Sigmoid colon (tissue), 7 donors: ENCODE measurements at regions of chr12 and their contacts with region 1.

Region 1: GRCh38 chr12:9124383-9125031 is 8.8 kb upstream of the A2M start:
- DNase-seq: no peak
- H3K4me3 ChIP-seq: no peak overlapping the region
- H3K27ac ChIP-seq: peak overlapping the region; percentile 12 to 67 (median 40)
- H3K4me1 ChIP-seq: peaks cover 0 to 8% (median 5%) of the 10 kb centered on the region in 4 donors
- H3K27me3 ChIP-seq: no peaks in the 10 kb centered on the region
- CTCF ChIP-seq: no peak
- EP300 ChIP-seq: no peak
- POLR2A ChIP-seq: no peak

Region 2: GRCh38 chr12:9079883-9080675 is 44.4 kb before region 1 on chr12:
- intact Hi-C with region 1: no loop called
- DNase-seq: no peak
- H3K4me3 ChIP-seq: no peak overlapping the region
- H3K27ac ChIP-seq: no peak overlapping the region
- H3K4me1 ChIP-seq: no peaks in the 10 kb centered on the region
- H3K27me3 ChIP-seq: no peaks in the 10 kb centered on the region
- CTCF ChIP-seq: no peak
- EP300 ChIP-seq: no peak
- POLR2A ChIP-seq: no peak

Region 3: DNA sequence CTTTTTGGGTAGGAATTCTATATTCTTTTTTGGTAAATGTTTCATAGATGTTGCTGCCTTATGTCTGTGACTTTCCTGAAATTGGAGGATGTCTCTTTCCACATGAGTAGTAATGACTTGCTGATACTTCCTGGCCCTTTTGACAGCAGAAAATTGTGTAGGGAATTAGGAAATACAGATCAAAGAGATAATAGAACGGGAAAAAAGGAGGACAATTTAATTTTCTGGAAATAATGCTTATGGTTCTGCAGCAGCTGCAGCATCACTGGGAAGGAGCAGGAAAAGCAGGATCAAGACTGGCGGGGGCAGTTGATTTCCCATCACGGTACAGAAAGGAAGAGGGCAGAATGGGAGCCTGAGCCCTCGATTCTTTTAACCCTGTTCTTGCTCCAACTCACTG is 152.5 kb after region 1 on chr12:
- intact Hi-C with region 1: loop called (anchors 5 kb)
- DNase-seq: no peak
- H3K4me3 ChIP-seq: no peak overlapping the region
- H3K27ac ChIP-seq: no peak overlapping the region
- H3K4me1 ChIP-seq: no peaks in the 10 kb centered on the region
- H3K27me3 ChIP-seq: no peaks in the 10 kb centered on the region
- CTCF ChIP-seq: no peak
- EP300 ChIP-seq: no peak
- POLR2A ChIP-seq: no peak